Dorsolateral prefrontal cortex (tissue), 120 donors: ENCODE measurements at regions of chr15 and their contacts with region 1.

Region 1: DNA sequence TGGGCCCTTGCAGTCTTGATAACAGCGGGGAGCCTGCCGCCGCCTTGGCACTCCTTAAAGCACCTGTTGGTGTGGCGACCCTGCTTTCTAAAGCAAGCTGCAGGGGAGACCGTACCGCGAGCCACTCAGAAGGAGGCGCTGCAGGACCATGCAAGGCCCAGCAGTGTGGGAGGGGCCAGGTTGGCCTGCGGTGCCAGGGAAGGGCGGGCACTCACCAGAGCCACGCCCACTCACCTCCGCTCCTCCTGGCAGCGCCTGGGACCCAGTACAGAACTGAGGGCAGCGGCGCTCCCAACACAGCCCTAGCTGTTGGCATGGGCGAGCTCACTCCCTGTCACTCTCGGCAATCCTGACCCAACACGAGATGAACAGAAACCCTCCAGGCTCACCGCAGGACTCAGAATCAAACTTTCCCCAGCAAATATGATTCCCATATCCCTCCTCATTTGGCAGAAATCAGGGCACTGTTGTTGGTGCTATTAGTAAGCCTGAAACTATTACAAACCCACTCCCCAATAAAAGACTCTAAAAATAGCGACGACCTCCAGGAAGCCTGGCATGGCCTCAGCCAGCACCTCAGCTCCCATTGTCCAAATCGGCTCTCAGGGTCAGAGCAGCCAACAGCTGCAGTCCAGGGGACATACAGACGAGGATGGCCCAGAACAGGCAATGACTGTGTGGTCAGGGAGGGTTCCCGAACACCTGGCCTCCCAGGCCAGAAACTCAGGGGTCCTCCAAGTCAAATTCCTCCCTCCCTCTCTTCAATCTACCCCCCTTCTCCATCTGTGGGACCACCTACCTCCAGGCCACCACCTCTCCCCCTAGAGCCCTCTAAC is 77.2 kb downstream of the TBC1D2B start:
- DNase-seq: peak in 3 of 10 donors; percentile 32 to 46 (median 43)
- H3K4me3 ChIP-seq: no peak overlapping the region
- H3K27ac ChIP-seq: no peak overlapping the region
- H3K27me3 ChIP-seq: no peaks in the 10 kb centered on the region
- CTCF ChIP-seq: peak in 38 of 56 donors; percentile 16 to 59 (median 39)

Region 2: GRCh38 chr15:77966540-77967290 is 33.6 kb before region 1 on chr15:
- intact Hi-C with region 1: loop called in 1 of 2 experiments (anchors 5 kb)
- DNase-seq: peak in 7 of 10 donors; percentile 44 to 75 (median 64)
- H3K4me3 ChIP-seq: no peak overlapping the region
- H3K27ac ChIP-seq: no peak overlapping the region
- H3K27me3 ChIP-seq: no peaks in the 10 kb centered on the region
- CTCF ChIP-seq: peak; percentile 70 to 97 (median 89)

Region 3: GRCh38 chr15:78437762-78438302 is 437.5 kb after region 1 on chr15 and contains the start of gene IREB2:
- intact Hi-C with region 1: no loop called
- DNase-seq: peak; percentile 90 to 98 (median 97)
- H3K4me3 ChIP-seq: peak within 1 kb of the TSS; percentile 71 to 100 (median 96)
- H3K27ac ChIP-seq: peak within 1 kb of the TSS; percentile 70 to 98 (median 95)
- H3K27me3 ChIP-seq: no peaks in the 10 kb centered on the region
- CTCF ChIP-seq: peak in 40 of 56 donors; percentile 3 to 62 (median 29)
- total RNA-seq, gene IREB2: 33.8 to 90.3 (median 60.4) TPM